ENCODE measurements at regions of chr13 and their contacts with region 1.

Region 1: DNA sequence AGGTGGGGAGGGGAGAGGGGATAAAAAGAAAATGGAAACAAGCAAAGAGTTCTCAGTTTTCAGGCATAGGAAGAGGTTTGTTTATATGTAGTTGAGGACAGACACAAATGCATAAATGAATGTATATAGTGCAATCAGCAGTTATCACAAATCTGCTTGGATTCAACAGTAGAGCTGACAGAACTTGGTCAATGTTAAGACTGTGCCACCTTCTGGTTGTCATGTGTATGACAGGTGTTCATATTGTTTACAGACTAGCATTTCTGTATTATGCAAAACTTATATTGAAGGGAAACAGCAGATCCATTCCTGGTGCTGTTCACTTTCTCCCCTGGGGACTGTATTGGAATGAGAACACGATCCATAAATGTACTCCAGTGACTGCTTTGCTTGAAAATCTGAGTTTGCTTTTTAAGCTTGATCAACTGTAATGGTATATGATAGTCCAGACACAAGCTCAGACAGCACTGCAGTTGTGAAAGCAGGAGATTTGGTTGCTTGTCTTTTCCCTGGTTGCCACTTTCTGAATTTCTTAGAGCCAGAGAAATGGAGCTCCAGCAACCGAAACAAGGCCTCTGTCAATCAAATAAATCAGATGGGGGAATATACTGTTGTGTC is 319.5 kb upstream of the OBI1 start:
- DNase-seq: no peak
- ATAC-seq: peak; percentile 80
- H3K4me3 Mint-ChIP-seq: no peak overlapping the region
- H3K27ac Mint-ChIP-seq: no peak overlapping the region
- H3K4me1 Mint-ChIP-seq: no peaks in the 10 kb centered on the region
- H3K27me3 Mint-ChIP-seq: no peaks in the 10 kb centered on the region
- CTCF ChIP-seq: peak; percentile 50

Region 2: DNA sequence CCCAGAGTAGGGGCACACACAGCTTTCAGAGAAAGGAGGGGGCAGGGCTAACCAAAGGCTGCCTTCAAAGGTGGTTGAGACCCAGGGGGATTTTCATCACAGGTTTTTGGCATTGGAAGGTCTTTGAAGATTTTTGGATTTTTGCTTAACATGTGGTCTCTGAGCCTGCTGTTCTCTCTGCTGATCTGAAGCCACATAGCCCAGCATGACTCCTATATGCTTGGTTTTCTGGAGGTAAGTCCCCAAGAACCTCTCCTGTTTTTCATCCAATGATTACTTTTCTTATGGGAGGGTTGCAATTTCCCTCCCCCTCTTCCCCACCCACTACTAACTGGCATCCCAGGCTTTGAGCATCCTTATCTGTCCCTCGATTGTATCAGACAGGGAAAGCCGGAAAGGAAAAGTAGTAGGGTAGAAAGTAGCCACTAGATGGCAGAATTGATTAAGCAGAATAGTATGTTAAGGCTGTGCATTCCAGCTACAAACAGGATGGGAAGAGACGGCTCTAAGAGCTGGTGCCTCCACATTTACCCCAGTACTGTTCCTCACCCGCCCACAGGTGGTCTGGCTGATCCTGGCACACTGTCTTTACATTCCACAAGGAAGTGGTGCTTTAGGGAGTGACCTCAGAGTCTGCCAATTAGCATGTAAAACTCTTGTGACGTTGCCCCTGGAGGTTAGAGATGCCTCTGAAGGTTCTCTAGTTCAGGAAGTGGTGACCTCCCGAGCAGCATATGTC is 840.9 kb before region 1 on chr13:
- CTCF ChIA-PET with region 1: interaction called, 14 read pairs
- POLR2A ChIA-PET with region 1: no interaction called
- DNase-seq: peak; percentile 46
- ATAC-seq: peak; percentile 99
- H3K4me3 Mint-ChIP-seq: no peak overlapping the region
- H3K27ac Mint-ChIP-seq: no peak overlapping the region
- H3K4me1 Mint-ChIP-seq: peaks cover 12% of the 10 kb centered on the region
- H3K27me3 Mint-ChIP-seq: no peaks in the 10 kb centered on the region
- CTCF ChIP-seq: peak; percentile 46; the same call in 1 of the 2 replicates

Region 3: GRCh38 chr13:78875792-78876580 is 102.5 kb before region 1 on chr13:
- CTCF ChIA-PET with region 1: interaction called, 15 read pairs
- POLR2A ChIA-PET with region 1: no interaction called
- DNase-seq: peak; percentile 71
- ATAC-seq: peak; percentile 99
- H3K4me3 Mint-ChIP-seq: no peak overlapping the region
- H3K27ac Mint-ChIP-seq: no peak overlapping the region
- H3K4me1 Mint-ChIP-seq: no peaks in the 10 kb centered on the region
- H3K27me3 Mint-ChIP-seq: no peaks in the 10 kb centered on the region; the same call in 1 of the 2 replicates
- CTCF ChIP-seq: no peak

Region 4: DNA sequence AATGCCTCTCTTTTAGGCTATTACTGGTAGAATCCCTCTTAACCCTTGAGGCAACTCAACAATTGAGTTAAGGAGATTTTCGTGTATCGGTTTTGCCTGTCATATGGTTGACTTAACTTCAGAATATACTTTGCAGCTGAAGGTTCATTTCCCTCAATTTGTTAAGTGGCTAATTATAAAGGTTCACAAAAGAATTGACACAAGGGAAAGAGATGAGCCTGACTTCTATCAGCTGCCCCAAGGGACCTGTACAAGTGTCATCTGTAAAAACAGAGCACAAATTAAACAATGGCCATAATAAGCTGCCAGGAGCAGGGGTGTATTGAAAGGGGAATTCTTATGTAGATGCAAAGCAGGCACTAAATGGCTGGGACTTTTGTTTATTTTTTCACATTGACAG is 15.3 kb after region 1 on chr13:
- CTCF ChIA-PET with region 1: interaction called, 10 read pairs
- POLR2A ChIA-PET with region 1: no interaction called
- DNase-seq: no peak
- ATAC-seq: no peak
- H3K4me3 Mint-ChIP-seq: no peak overlapping the region; the same call in 1 of the 2 replicates
- H3K27ac Mint-ChIP-seq: peak overlapping the region; percentile 22; the same call in 1 of the 2 replicates
- H3K4me1 Mint-ChIP-seq: peaks cover 22% of the 10 kb centered on the region
- H3K27me3 Mint-ChIP-seq: no peaks in the 10 kb centered on the region
- CTCF ChIP-seq: no peak

Measured in WTC11 (cell line).